ENCODE measurements at regions of chr12 and their contacts with region 1.

Region 1: DNA sequence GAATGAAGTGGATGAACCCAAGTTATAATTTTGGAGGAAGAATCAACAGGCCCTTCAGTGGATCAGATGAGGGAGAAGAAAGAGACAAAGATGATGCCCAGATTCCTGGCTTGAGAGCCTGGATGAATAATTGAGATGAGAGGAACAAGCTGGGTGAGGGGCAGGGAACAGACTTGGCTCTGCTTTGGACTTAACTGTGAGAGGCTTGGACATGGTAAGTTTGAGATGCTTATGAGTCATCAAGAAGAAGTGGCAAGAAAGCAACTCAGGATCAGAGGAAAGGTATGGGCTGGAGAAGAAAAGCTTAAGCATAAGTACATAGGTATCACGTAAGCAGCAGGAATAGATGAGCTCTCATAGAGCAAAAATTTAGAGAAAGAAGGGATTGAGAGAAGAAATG is 55.3 kb downstream of the FIGNL2 start:
- DNase-seq: peak; percentile 7
- H3K4me3 ChIP-seq: no peak overlapping the region
- H3K27ac ChIP-seq: no peak overlapping the region
- H3K4me1 ChIP-seq: peaks cover 10% of the 10 kb centered on the region
- H3K27me3 ChIP-seq: no peaks in the 10 kb centered on the region
- CTCF ChIP-seq: no peak

Region 2: GRCh38 chr12:51622564-51622963 is 170.6 kb before region 1 on chr12:
- CTCF ChIA-PET with region 1: no interaction called
- dilution Hi-C with region 1: loop called (anchors 10 kb)
- in situ Hi-C with region 1: no loop called
- intact Hi-C with region 1: no loop called
- DNase-seq: no peak
- H3K4me3 ChIP-seq: no peak overlapping the region
- H3K27ac ChIP-seq: no peak overlapping the region
- H3K4me1 ChIP-seq: no peaks in the 10 kb centered on the region
- H3K27me3 ChIP-seq: no peaks in the 10 kb centered on the region
- CTCF ChIP-seq: no peak

Region 3: GRCh38 chr12:51855596-51856428 is 62.6 kb after region 1 on chr12:
- CTCF ChIA-PET with region 1: no interaction called
- dilution Hi-C with region 1: loop called (anchors 10 kb)
- in situ Hi-C with region 1: no loop called
- intact Hi-C with region 1: no loop called
- DNase-seq: no peak
- H3K4me3 ChIP-seq: peak overlapping the region in 1 of 3 experiments; percentile 21
- H3K27ac ChIP-seq: no peak overlapping the region
- H3K4me1 ChIP-seq: peaks cover 3% of the 10 kb centered on the region
- H3K27me3 ChIP-seq: peaks cover 4% of the 10 kb centered on the region
- CTCF ChIP-seq: no peak

Region 4: DNA sequence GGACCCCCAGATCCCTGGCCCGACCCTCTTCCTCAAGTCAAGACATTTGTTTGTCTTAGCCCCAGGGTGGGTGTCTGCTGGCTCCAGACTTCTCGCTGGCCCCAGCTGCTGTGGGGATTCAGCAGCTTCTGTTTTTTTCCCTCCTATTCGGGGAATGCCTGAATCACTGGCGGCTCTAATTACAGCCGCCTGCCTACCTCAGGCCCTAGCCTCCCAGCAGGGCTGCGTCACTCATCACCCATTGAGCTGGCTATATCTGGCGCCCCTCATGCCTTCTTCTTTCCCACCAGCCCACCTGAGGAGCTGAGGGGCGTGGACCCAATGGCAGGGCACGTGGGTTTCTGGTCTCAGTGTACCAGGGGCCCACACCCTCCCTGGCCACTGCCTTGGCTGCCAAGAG is 388.5 kb after region 1 on chr12:
- CTCF ChIA-PET with region 1: no interaction called
- dilution Hi-C with region 1: no loop called
- in situ Hi-C with region 1: no loop called
- intact Hi-C with region 1: no loop called
- DNase-seq: no peak
- H3K4me3 ChIP-seq: no peak overlapping the region
- H3K27ac ChIP-seq: no peak overlapping the region
- H3K4me1 ChIP-seq: peaks cover 36% of the 10 kb centered on the region
- H3K27me3 ChIP-seq: no peaks in the 10 kb centered on the region
- CTCF ChIP-seq: no peak

Measured in mammary epithelial cell (primary cell).